ENCODE measurements at regions of chr1 and their contacts with region 1.

Region 1: DNA sequence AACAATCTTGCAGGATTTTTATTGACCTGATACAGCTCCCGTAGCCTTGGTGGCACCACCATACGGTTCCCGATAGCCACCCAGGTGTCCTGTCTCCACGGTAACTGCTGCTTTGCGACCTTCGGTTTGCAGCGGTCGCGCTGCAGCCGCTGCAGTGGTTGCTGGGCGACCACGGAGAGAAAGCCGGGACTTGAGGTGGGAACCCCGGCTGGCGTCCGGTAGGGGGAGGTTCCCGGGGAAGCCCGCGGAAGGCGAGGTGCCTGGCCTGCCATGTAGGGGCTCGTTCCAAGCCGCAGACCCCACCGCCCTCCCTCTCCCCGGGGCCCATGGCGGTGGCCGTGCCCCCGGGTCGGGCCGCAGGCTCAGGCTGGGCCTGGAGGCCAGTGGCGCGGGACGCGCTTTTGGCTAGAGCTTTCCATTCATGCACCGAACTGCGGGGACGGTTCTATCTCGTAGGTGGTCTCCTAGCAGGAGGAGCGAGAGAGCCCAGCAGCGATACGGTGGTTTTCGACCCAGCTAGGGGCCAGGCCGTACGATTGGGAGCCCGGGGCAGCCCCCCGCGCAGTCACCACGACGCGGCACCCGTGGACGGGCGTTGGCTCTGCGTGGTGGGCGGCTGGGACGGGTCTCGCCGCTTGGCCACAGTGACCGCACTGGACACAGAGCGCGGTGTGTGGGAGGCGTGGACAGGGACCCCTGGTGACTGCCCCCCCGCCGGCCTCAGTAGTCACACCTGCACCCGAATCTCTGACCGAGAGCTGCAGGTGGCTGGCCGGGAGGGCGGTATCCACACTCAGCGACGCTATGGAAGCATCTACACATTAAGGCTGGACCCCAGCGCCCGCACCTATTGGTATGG is at the start of gene KLHDC9:
- DNase-seq: peak; percentile 86
- ATAC-seq: peak; percentile 78
- H3K4me3 Mint-ChIP-seq: peak within 1 kb of the TSS; percentile 80
- H3K27ac Mint-ChIP-seq: peak within 1 kb of the TSS; percentile 91
- H3K4me1 Mint-ChIP-seq: peaks cover 30% of the 10 kb centered on the region
- H3K27me3 Mint-ChIP-seq: peaks cover 2% of the 10 kb centered on the region
- total RNA-seq, gene KLHDC9: 0.61 to 0.91 TPM

Region 2: GRCh38 chr1:161021165-161021960 is 77.1 kb before region 1 on chr1:
- CTCF ChIA-PET with region 1: interaction called, 10 read pairs
- POLR2A ChIA-PET with region 1: interaction called, 7 read pairs
- DNase-seq: peak; percentile 90
- ATAC-seq: peak; percentile 95
- H3K4me3 Mint-ChIP-seq: peak overlapping the region; percentile 87
- H3K27ac Mint-ChIP-seq: peak overlapping the region; percentile 79
- H3K4me1 Mint-ChIP-seq: peaks cover 43% of the 10 kb centered on the region
- H3K27me3 Mint-ChIP-seq: peaks cover 2% of the 10 kb centered on the region

Region 3: DNA sequence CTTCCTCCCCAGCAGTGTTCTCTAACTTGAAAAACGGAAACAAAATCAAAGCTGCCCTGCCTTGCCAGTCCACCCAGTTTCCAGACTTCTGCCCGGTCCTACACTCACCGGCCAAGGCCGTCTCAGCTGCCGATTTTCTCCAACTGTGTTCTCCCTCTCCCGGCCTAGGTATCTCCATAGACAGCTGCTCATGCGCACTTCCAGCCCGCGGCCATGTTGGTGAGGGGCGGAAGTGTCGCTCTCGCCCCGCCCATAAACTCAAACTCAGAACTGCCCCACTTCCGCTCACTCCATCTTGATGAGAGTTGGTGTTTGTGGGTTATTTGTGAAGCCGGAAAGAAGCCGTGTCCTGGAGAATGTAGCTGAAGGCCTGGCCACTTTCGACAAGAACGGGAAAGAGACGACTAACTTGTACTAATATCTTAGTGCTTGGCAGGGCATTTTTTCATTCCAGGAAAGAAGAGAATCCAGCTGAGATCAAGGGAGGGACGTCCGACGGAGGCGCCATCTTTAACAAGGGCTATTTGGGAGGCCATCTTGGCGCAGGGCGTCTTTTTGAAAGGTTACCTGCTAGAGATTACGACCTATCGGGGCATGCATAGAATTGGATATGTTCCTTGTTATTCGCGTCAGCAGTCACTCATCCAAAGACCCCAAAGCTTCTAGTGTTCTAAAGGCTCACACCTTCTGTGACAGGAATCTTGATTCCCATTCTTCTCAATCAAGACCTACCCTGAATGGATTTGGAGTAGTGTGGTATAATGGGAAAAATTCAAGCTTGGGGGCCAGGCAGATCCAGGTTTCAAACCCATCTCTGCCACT is 52.5 kb before region 1 on chr1 and contains the start of gene USF1:
- CTCF ChIA-PET with region 1: interaction called, 52 read pairs
- POLR2A ChIA-PET with region 1: interaction called, 20 read pairs
- DNase-seq: peak; percentile 96
- ATAC-seq: peak; percentile 68
- H3K4me3 Mint-ChIP-seq: peak within 1 kb of the TSS; percentile 85
- H3K27ac Mint-ChIP-seq: peak within 1 kb of the TSS; percentile 99
- H3K4me1 Mint-ChIP-seq: peaks cover 49% of the 10 kb centered on the region
- H3K27me3 Mint-ChIP-seq: no peaks in the 10 kb centered on the region
- total RNA-seq, gene USF1: 81.6 to 83.2 TPM

Region 4: GRCh38 chr1:161071886-161072371 is 26.5 kb before region 1 on chr1:
- CTCF ChIA-PET with region 1: interaction called, 292 read pairs
- POLR2A ChIA-PET with region 1: interaction called, 86 read pairs
- DNase-seq: peak; percentile 75
- ATAC-seq: no peak
- H3K4me3 Mint-ChIP-seq: no peak overlapping the region
- H3K27ac Mint-ChIP-seq: peak overlapping the region; percentile 26
- H3K4me1 Mint-ChIP-seq: peaks cover 60% of the 10 kb centered on the region
- H3K27me3 Mint-ChIP-seq: no peaks in the 10 kb centered on the region

Region 5: GRCh38 chr1:161111527-161111926 is 13.1 kb after region 1 on chr1:
- CTCF ChIA-PET with region 1: interaction called, 11 read pairs
- POLR2A ChIA-PET with region 1: interaction called, 3 read pairs
- DNase-seq: no peak
- ATAC-seq: no peak
- H3K4me3 Mint-ChIP-seq: no peak overlapping the region
- H3K27ac Mint-ChIP-seq: no peak overlapping the region
- H3K4me1 Mint-ChIP-seq: peaks cover 42% of the 10 kb centered on the region
- H3K27me3 Mint-ChIP-seq: no peaks in the 10 kb centered on the region

Region 6: GRCh38 chr1:161139765-161140164 is 41.3 kb after region 1 on chr1:
- CTCF ChIA-PET with region 1: interaction called, 10 read pairs
- POLR2A ChIA-PET with region 1: no interaction called
- DNase-seq: peak; percentile 64
- ATAC-seq: peak; percentile 70
- H3K4me3 Mint-ChIP-seq: no peak overlapping the region
- H3K27ac Mint-ChIP-seq: no peak overlapping the region
- H3K4me1 Mint-ChIP-seq: peaks cover 9% of the 10 kb centered on the region
- H3K27me3 Mint-ChIP-seq: no peaks in the 10 kb centered on the region

Measured in activated CD8-positive, alpha-beta T cell treated with anti-CD3 and anti-CD28 coated beads, Interleukin-2, amount 10 ng/mL, durations not matched to agents 7 days and 5 days (primary cell).